Activated CD4-positive, alpha-beta T cell treated with anti-CD3 and anti-CD28 coated beads, Interleukin-2, amount 10 ng/mL, durations not matched to agents 7 days and 5 days (primary cell): ENCODE measurements at regions of chr4 and their contacts with region 1.

Region 1: GRCh38 chr4:185554365-185555126 is 19.2 kb upstream of the PDLIM3 start:
- DNase-seq: no peak
- H3K4me3 Mint-ChIP-seq: no peak overlapping the region
- H3K27ac Mint-ChIP-seq: no peak overlapping the region
- H3K4me1 Mint-ChIP-seq: no peaks in the 10 kb centered on the region
- H3K27me3 Mint-ChIP-seq: peaks cover 32% of the 10 kb centered on the region

Region 2: GRCh38 chr4:185504098-185505047 is 50.2 kb before region 1 on chr4:
- CTCF ChIA-PET with region 1: no interaction called
- POLR2A ChIA-PET with region 1: no interaction called
- DNase-seq: no peak
- H3K4me3 Mint-ChIP-seq: no peak overlapping the region
- H3K27ac Mint-ChIP-seq: no peak overlapping the region
- H3K4me1 Mint-ChIP-seq: no peaks in the 10 kb centered on the region
- H3K27me3 Mint-ChIP-seq: peaks cover 22% of the 10 kb centered on the region

Region 3: GRCh38 chr4:185534866-185535611 is 19.5 kb before region 1 on chr4 and contains the start of gene PDLIM3:
- CTCF ChIA-PET with region 1: interaction called, 3 read pairs
- POLR2A ChIA-PET with region 1: interaction called, 11 read pairs
- DNase-seq: no peak
- H3K4me3 Mint-ChIP-seq: peak within 1 kb of the TSS; percentile 17
- H3K27ac Mint-ChIP-seq: no peak within 1 kb of the TSS
- H3K4me1 Mint-ChIP-seq: peaks cover 4% of the 10 kb centered on the region
- H3K27me3 Mint-ChIP-seq: peaks cover 40% of the 10 kb centered on the region
- total RNA-seq, gene PDLIM3: not detected